ENCODE measurements at regions of chr12 and their contacts with region 1.

Region 1: GRCh38 chr12:116009805-116010204 is 267.7 kb downstream of the MED13L start:
- DNase-seq: no peak
- H3K4me3 ChIP-seq: no peak overlapping the region
- H3K27ac ChIP-seq: no peak overlapping the region
- H3K4me1 ChIP-seq: no peaks in the 10 kb centered on the region
- H3K27me3 ChIP-seq: no peaks in the 10 kb centered on the region
- CTCF ChIP-seq: peak in 1 of 6 experiments; percentile 13
- POLR2A ChIP-seq: no peak

Region 2: GRCh38 chr12:116697305-116697704 is 687.5 kb after region 1 on chr12:
- intact Hi-C with region 1: loop called (anchors 10 kb)
- DNase-seq: peak in 1 of 2 donors; percentile 37
- H3K4me3 ChIP-seq: no peak overlapping the region
- H3K27ac ChIP-seq: peak overlapping the region; percentile 44 to 78 (median 77)
- H3K4me1 ChIP-seq: peaks cover 33 to 43% of the 10 kb centered on the region in 2 donors
- H3K27me3 ChIP-seq: no peaks in the 10 kb centered on the region
- CTCF ChIP-seq: peak in 2 of 6 experiments; percentile 18 to 34
- POLR2A ChIP-seq: no peak